A549 (cell line): ENCODE measurements at regions of chr5 and their contacts with region 1.

Region 1: GRCh38 chr5:90709323-90710155 is 150.9 kb downstream of the ADGRV1 start:
- DNase-seq: peak; percentile 46 to 53
- ATAC-seq: peak; percentile 94 to 96
- H3K4me3 ChIP-seq: no peak overlapping the region
- H3K27ac ChIP-seq: no peak overlapping the region
- H3K4me1 ChIP-seq: no peaks in the 10 kb centered on the region
- CTCF ChIP-seq: peak; percentile 64
- EP300 ChIP-seq: no peak
- POLR2A ChIP-seq: no peak
- RAD21 ChIP-seq: peak; percentile 51 to 65

Region 2: DNA sequence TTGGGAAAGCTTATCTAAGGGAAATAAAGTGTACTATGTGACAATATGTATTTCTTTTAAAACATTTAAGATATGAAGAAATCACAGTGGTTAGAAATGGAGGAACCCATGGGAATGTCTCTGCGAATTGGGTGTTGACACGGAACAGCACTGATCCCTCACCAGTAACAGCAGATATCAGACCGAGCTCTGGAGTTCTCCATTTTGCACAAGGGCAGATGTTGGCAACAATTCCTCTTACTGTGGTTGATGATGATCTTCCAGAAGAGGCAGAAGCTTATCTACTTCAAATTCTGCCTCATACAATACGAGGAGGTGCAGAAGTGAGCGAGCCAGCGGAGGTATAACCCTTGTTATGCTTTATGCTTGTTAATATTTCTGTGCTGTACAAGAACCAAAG is 81.0 kb before region 1 on chr5:
- CTCF ChIA-PET with region 1: no interaction called
- POLR2A ChIA-PET with region 1: no interaction called
- DNase-seq: no peak
- ATAC-seq: no peak
- H3K4me3 ChIP-seq: no peak overlapping the region
- H3K27ac ChIP-seq: no peak overlapping the region
- H3K4me1 ChIP-seq: no peaks in the 10 kb centered on the region
- CTCF ChIP-seq: no peak
- EP300 ChIP-seq: no peak
- POLR2A ChIP-seq: no peak
- RAD21 ChIP-seq: no peak

Region 3: DNA sequence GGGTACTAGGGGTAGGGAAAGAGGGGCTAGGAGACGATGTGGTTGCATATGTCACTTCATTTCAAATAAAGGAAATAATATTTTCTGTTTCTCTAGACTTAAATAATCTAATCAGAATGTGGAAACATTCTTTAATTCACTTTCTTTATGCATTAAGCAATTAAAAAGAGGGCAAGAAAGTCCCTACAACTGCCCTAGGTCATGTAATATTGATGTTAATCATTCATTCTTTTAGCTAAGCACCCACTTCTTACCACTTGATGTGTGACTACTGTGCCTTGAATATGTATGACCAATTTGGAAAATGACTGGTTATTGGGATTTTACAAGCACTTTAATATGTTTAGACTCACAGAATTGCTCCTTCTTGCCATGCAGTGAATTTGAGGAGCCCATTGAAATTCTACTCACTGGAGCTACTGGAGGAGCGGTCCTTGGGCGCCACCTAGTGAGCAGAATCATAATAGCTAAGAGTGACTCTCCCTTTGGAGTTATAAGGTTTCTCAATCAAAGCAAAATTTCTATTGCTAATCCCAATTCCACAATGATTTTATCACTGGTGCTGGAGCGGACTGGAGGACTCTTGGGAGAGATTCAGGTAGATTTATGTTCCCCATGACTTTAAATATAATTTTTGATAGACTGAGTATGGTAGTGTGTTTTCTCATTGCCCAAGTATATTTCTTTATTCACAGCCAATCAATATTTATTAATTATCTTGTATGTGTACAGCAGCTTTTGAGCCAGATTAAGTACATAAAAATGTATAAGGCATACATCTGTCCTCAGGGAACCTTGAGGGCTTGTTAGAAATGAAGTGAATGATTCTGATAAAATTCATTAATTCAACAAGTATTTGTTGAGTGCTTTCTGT is 74.2 kb after region 1 on chr5:
- CTCF ChIA-PET with region 1: interaction called, 41 read pairs
- POLR2A ChIA-PET with region 1: no interaction called
- DNase-seq: peak; percentile 13 to 58
- ATAC-seq: peak; percentile 95 to 97
- H3K4me3 ChIP-seq: no peak overlapping the region
- H3K27ac ChIP-seq: no peak overlapping the region
- H3K4me1 ChIP-seq: no peaks in the 10 kb centered on the region
- CTCF ChIP-seq: peak; percentile 89
- EP300 ChIP-seq: no peak
- POLR2A ChIP-seq: no peak
- RAD21 ChIP-seq: peak; percentile 89 to 92